CD8-positive, alpha-beta T cell (primary cell): ENCODE measurements at regions of chr9 and their contacts with region 1.

Region 1: DNA sequence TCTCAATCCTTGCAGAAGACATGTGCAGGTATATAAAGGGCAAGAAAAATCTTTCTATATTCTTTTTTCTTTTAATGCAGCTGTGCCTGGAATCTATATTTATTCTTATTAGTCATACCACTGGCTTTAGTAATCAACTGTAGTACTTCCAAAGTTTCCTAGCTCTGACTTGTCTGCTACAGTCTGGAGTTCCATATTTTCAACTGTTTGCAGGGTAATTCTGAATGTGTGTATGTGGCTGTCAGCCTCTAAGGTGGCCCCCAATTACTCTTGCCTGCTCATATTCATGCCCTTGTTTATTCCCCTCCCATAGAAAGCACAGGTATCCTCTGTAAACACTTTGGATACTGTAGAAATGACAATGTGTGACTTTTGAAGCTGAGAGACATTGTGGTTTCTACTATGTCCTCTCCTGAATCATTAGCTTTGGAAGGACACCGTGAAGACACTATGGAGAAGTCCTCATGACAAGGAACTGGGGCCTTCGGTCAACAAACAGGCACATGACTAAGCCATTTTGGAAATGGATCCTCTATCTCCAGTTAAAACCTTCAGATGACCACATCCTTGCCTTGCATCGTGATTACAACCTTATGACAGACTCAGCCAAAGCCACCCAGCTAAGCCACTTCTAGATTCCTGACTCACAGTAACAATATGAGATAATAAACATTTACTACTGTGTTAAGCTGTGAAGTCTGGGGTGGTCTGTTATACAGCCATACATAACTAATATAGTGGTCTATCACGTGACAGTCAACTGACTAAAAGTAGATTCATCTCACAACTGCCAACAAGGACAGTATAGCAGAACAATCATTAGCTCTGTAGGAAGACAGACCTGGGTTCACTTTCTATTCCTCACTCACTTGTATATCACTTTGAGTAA is 49.5 kb upstream of the SUSD1 start:
- DNase-seq: no peak
- ATAC-seq: no peak
- H3K4me3 ChIP-seq: no peak overlapping the region
- H3K4me3 Mint-ChIP-seq: no peak overlapping the region
- H3K27ac ChIP-seq: no peak overlapping the region
- H3K27ac Mint-ChIP-seq: no peak overlapping the region
- H3K4me1 ChIP-seq: no peaks in the 10 kb centered on the region
- H3K4me1 Mint-ChIP-seq: peaks cover 6% of the 10 kb centered on the region
- H3K27me3 ChIP-seq: no peaks in the 10 kb centered on the region
- H3K27me3 Mint-ChIP-seq: no peaks in the 10 kb centered on the region
- CTCF ChIP-seq: no peak

Region 2: DNA sequence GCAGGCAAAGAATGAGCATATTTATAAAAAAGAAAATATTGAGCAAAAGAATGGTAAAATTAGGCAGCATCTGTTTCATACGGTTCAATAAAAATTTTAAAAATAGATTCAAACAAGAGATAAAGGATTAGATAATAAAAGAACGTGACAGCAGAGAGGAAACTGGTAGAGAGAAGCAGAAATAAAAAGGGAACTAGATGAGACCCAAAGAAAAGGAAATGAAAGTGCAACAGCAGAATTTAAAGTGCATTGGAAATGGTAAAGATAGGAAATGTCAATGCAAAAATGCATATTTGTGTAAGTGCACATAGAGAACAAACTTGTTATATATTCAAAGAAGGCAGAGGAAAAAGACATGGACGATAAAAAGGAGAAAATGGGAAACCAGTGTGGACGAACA is 119.7 kb before region 1 on chr9:
- CTCF ChIA-PET with region 1: interaction called, 3 read pairs
- POLR2A ChIA-PET with region 1: no interaction called
- intact Hi-C with region 1: loop called in 1 of 2 experiments (anchors 10 kb)
- DNase-seq: no peak
- ATAC-seq: no peak
- H3K4me3 ChIP-seq: no peak overlapping the region
- H3K4me3 Mint-ChIP-seq: no peak overlapping the region
- H3K27ac ChIP-seq: no peak overlapping the region
- H3K27ac Mint-ChIP-seq: no peak overlapping the region
- H3K4me1 ChIP-seq: no peaks in the 10 kb centered on the region
- H3K4me1 Mint-ChIP-seq: no peaks in the 10 kb centered on the region
- H3K27me3 ChIP-seq: no peaks in the 10 kb centered on the region
- H3K27me3 Mint-ChIP-seq: no peaks in the 10 kb centered on the region
- CTCF ChIP-seq: no peak

Region 3: GRCh38 chr9:112327718-112328464 is 103.2 kb after region 1 on chr9:
- CTCF ChIA-PET with region 1: no interaction called
- POLR2A ChIA-PET with region 1: no interaction called
- intact Hi-C with region 1: loop called in 1 of 2 experiments (anchors 10 kb)
- DNase-seq: peak in 1 of 9 experiments; percentile 39
- ATAC-seq: no peak
- H3K4me3 ChIP-seq: no peak overlapping the region
- H3K4me3 Mint-ChIP-seq: peak overlapping the region; percentile 3
- H3K27ac ChIP-seq: peak overlapping the region in 1 of 2 experiments; percentile 8
- H3K27ac Mint-ChIP-seq: peak overlapping the region; percentile 39
- H3K4me1 ChIP-seq: peaks cover 25% of the 10 kb centered on the region
- H3K4me1 Mint-ChIP-seq: peaks cover 80% of the 10 kb centered on the region
- H3K27me3 ChIP-seq: no peaks in the 10 kb centered on the region
- H3K27me3 Mint-ChIP-seq: no peaks in the 10 kb centered on the region
- CTCF ChIP-seq: no peak

Region 4: DNA sequence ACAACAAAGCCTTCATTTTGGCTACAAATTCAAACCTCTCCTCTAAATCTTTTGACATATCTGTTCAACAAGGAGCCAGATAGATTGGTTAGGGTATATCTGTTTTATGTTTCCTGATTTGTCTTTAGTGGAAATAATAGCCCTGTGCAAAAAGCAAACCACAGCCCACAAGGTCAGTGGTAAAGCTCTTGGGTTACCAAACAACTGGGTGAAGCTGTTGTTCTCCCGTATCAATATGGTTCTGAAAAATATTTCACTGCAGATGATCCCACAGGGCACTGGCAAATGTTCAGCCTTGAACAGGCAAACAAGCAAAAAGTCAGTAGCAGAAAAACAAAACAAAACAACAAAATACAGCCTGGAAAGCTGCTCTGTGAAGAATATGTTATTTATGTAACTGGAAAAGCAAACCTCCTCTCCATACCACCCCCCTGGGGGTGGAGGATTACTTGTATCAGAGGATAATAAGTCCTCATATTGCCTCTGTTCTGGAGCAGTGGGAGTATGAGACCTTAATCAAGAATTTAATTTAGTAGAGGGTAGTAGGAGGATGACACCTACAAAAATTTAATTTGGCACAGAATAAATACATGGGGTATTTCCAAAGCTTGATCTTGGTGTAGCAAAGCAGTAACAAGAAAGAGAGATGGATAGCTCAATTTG is 129.6 kb after region 1 on chr9:
- CTCF ChIA-PET with region 1: no interaction called
- POLR2A ChIA-PET with region 1: no interaction called
- intact Hi-C with region 1: no loop called
- DNase-seq: no peak
- ATAC-seq: no peak
- H3K4me3 ChIP-seq: no peak overlapping the region
- H3K4me3 Mint-ChIP-seq: no peak overlapping the region
- H3K27ac ChIP-seq: no peak overlapping the region
- H3K27ac Mint-ChIP-seq: no peak overlapping the region
- H3K4me1 ChIP-seq: no peaks in the 10 kb centered on the region
- H3K4me1 Mint-ChIP-seq: peaks cover 11% of the 10 kb centered on the region
- H3K27me3 ChIP-seq: no peaks in the 10 kb centered on the region
- H3K27me3 Mint-ChIP-seq: peaks cover 2% of the 10 kb centered on the region
- CTCF ChIP-seq: no peak